ENCODE measurements at regions of chr3 and their contacts with region 1.

Region 1: GRCh38 chr3:120558771-120559241 is 37.3 kb upstream of the NDUFB4 start:
- DNase-seq: peak; percentile 88 to 94 (median 88)
- ATAC-seq: peak; percentile 37 to 60 (median 44)
- H3K4me3 ChIP-seq: peak overlapping the region; percentile 9 to 62 (median 52)
- H3K27ac ChIP-seq: peak overlapping the region; percentile 81 to 96 (median 91)
- H3K4me1 ChIP-seq: peaks cover 0 to 72% (median 49%) of the 10 kb centered on the region in 12 donors
- H3K27me3 ChIP-seq: no peaks in the 10 kb centered on the region
- CTCF ChIP-seq: peak; percentile 95 to 100 (median 99)
- POLR2A ChIP-seq: peak in 1 of 2 donors; percentile 33

Region 2: DNA sequence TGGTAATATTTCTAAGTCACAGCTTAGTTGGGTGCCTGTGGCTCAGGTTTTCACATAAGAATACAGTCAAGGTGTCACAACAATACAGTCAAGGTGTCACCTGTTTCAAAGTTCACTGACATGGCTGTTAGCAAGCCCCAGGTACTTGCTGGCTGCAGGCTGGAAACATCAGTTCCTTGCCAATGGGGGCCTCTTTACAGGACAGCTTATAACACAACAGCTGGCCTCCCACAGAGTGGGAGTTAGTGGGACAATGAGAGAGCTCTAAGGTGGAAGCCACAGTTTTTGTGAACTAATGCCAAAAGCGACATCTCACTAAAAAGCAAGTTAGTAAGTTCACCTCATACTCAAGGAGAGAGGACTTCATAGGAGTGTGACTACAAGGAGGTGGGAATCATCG is 319.2 kb before region 1 on chr3:
- intact Hi-C with region 1: loop called in 9 of 10 experiments (anchors 1 to 5 kb)
- DNase-seq: no peak
- ATAC-seq: no peak
- H3K4me3 ChIP-seq: no peak overlapping the region
- H3K27ac ChIP-seq: no peak overlapping the region
- H3K4me1 ChIP-seq: no peaks in the 10 kb centered on the region
- H3K27me3 ChIP-seq: peaks cover 0 to 8% (median 0%) of the 10 kb centered on the region in 9 donors
- CTCF ChIP-seq: no peak
- POLR2A ChIP-seq: no peak

Region 3: DNA sequence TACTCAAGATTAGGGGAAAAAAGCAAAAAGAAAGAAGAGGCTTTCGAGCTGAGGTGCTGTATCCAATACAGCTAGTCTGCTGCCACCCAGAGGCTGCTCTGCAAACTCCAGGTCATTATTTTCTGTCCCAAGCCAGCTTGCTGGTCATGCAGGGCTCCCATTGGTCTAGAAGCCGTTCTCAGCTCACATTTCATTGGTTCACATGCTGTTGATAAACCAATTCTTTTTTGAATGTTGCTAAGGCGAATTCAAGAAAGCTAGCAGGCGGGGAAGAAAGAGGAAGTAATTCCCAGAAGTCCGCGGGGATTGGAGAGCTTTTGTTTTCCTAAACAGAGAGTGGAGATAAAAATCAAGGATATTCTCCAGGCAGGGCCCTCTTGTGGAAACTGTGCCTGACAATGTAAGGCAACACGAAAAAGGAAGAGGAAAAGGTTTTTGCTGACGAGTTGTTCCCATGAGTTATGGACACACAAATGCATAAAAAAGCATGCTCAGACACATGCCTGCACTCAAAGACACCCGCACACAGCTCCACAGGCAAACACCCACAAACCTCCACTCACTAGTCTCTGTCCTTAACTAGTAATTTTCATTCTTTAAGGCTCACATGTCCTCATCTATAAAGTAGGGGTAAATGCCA is 141.4 kb before region 1 on chr3:
- intact Hi-C with region 1: loop called (anchors 1 to 5 kb)
- DNase-seq: peak; percentile 88 to 94 (median 93)
- ATAC-seq: peak; percentile 34 to 73 (median 60)
- H3K4me3 ChIP-seq: peak overlapping the region in 9 of 12 donors; percentile 10 to 47 (median 32)
- H3K27ac ChIP-seq: peak overlapping the region; percentile 65 to 92 (median 86)
- H3K4me1 ChIP-seq: peaks cover 16 to 79% (median 62%) of the 10 kb centered on the region in 12 donors
- H3K27me3 ChIP-seq: no peaks in the 10 kb centered on the region
- CTCF ChIP-seq: peak; percentile 84 to 95 (median 88)
- POLR2A ChIP-seq: peak in 1 of 2 donors; percentile 48

Region 4: GRCh38 chr3:120470870-120471269 is 87.9 kb before region 1 on chr3:
- intact Hi-C with region 1: loop called in 1 of 10 experiments (anchors 5 kb)
- DNase-seq: peak in 4 of 5 donors; percentile 40 to 56 (median 51)
- ATAC-seq: peak; percentile 91 to 93 (median 92)
- H3K4me3 ChIP-seq: no peak overlapping the region
- H3K27ac ChIP-seq: peak overlapping the region in 10 of 12 donors; percentile 9 to 76 (median 66)
- H3K4me1 ChIP-seq: peaks cover 0 to 26% (median 9%) of the 10 kb centered on the region in 12 donors
- H3K27me3 ChIP-seq: no peaks in the 10 kb centered on the region
- CTCF ChIP-seq: no peak
- POLR2A ChIP-seq: no peak

Region 5: GRCh38 chr3:120742198-120742849 is 183.5 kb after region 1 on chr3 and contains the starts of genes GTF2E1 and RABL3:
- intact Hi-C with region 1: loop called in 2 of 10 experiments (anchors 1 to 2 kb)
- DNase-seq: peak; percentile 95 to 98 (median 97)
- ATAC-seq: peak; percentile 100
- H3K4me3 ChIP-seq: peak within 1 kb of the TSS; percentile 59 to 97 (median 85)
- H3K27ac ChIP-seq: peak within 1 kb of the TSS; percentile 83 to 98 (median 93)
- H3K4me1 ChIP-seq: peaks cover 0 to 29% (median 17%) of the 10 kb centered on the region in 12 donors
- H3K27me3 ChIP-seq: no peaks in the 10 kb centered on the region
- CTCF ChIP-seq: no peak
- POLR2A ChIP-seq: peak in 1 of 2 donors; percentile 64
- total RNA-seq, gene GTF2E1: 7.3 to 15.1 (median 12.2) TPM
- total RNA-seq, gene RABL3: 6.8 to 28.3 (median 17.5) TPM